GM10248 (cell line): ENCODE measurements at regions of chr22 and their contacts with region 1.

Region 1: GRCh38 chr22:22884010-22884887 is 3.4 kb upstream of the IGLL5 start:
- DNase-seq: peak; percentile 77
- CTCF ChIP-seq: peak; percentile 85

Region 2: GRCh38 chr22:22587577-22588188 is 296.6 kb before region 1 on chr22:
- CTCF ChIA-PET with region 1: interaction called, 17 read pairs
- POLR2A ChIA-PET with region 1: no interaction called
- DNase-seq: no peak
- CTCF ChIP-seq: no peak

Region 3: DNA sequence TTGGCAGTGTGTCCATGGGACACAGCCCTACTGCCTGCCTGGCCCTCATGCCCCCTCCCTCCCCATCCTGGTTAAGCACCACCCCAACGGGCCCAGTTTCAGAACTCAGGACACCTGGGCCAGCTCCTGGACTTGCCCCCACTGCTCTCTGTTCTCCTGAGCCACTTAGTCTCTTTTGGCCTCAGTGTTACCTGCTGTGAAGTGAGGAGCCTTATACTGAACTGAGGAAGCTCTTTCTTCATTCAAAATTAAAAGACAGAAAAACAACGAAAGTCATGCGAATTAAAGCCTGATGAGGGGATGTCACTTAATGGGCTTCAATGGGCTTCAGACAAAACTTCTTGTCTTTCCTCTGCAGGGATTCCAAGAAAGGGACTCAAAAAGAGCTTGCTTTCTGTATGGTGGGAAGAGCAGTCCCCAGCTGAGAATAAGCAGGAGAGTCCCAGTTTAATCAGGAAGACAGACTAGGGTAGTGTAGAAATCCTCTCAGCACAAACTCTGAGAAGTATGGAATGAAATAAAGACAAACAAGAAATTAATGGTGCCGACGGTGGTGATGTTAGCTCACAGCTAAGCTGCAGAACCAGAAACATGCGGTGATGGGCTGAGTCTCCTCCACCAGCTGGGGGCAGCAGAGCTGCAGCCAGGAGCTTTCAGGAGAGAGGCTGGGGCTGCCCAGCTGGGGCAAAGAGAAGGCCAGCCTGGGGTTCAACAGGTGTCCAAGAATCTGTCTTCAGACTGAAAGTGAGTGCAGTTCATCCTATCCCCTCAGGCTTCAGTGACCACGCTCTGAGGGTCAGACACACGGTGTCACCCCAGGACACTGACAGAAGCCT is 138.8 kb before region 1 on chr22:
- CTCF ChIA-PET with region 1: interaction called, 62 read pairs
- POLR2A ChIA-PET with region 1: no interaction called
- DNase-seq: peak; percentile 54
- CTCF ChIP-seq: peak; percentile 83

Region 4: DNA sequence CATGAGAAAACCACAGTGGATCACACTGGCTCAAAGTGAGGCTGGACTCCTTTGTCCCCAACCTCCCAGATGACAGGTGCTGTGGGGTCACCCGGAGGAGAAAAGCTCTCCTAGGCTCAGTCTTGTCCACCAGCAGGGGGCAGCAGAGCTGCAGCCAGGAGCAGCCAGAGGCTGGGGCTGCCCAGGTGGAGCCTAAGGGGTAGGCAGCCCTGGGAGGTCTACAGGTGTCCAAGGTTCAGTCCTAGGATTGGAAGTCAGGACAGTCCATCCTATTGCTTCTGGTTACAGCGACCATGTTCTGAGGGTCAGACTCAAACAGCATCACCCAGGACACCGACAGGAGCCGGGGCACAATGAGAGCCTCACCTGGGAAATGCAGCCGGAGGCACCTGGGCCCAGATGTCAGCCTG is 74.2 kb before region 1 on chr22:
- CTCF ChIA-PET with region 1: interaction called, 30 read pairs
- POLR2A ChIA-PET with region 1: no interaction called
- DNase-seq: peak; percentile 53
- CTCF ChIP-seq: peak; percentile 61

Region 5: GRCh38 chr22:22865311-22866072 is 18.8 kb before region 1 on chr22:
- CTCF ChIA-PET with region 1: interaction called, 169 read pairs
- POLR2A ChIA-PET with region 1: interaction called, 3 read pairs
- DNase-seq: peak; percentile 45
- CTCF ChIP-seq: no peak

Region 6: DNA sequence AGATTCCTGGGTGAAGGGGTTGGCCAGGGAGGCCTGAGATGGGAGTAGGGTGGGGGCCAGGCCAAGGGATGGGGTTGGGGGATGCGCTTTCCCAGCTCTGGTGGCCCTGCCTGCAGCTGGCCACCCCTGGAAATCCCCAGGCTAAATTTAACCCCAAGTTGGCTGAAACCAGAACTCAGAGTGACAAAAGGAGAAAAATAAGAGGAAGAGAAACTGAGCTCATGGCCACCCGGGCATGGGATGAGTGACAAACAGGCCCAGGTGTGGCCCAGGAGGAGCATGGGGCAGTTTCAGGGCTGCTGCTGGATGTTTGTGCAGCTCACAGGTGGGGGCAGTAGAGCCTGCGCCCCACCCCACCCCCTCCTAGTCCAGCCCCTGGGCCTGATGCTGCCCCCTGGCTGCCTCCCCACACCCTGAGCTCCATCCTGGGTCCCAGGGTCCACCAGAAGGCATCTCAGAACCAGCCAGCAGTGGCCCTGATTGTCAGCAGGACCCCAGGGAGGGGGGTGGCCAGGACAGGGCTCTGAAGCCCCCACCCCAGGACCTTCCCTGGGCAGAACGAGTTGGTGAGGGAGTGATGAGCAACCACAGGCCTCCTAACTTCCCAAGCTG is 51.4 kb after region 1 on chr22:
- CTCF ChIA-PET with region 1: interaction called, 55 read pairs
- POLR2A ChIA-PET with region 1: interaction called, 9 read pairs
- DNase-seq: peak; percentile 95
- CTCF ChIP-seq: peak; percentile 49

Region 7: DNA sequence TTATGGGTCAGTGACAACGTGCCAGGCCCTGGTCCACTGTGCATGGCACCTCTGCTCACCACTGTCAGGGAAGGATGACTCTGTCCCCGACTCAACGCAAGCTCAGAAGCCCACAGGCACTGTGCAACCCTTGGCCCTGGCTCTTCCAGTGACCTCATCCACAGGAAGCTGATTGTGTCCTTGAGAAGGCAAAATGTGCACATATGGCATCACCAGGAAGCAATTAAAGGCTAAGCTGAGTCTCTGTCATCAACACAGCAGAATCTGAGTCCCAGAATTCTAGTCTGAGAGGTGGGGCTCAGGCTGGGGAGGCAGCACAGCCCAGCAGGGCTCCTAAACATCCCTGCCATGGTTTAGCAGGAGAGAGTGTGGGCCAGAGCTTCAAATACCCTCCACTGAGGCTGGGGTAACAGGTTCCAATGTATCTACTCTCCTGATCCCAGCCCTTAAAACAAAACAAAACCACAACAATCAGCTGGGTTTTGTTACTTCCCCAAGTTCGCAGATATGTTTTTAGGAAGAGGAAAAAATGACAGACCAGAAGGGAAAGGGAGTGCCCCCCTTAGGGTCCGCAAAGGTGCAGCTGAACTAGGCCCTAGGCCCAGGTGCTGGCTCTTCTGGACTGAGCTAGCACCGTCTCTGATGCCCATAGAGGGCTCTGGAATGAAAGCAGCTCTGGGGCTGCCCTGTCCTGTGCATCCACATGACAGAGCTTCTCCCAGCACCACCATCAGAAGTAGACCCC is 152.6 kb after region 1 on chr22:
- CTCF ChIA-PET with region 1: no interaction called
- POLR2A ChIA-PET with region 1: no interaction called
- DNase-seq: no peak
- CTCF ChIP-seq: no peak